Activated CD4-positive, alpha-beta memory T cell treated with anti-CD3 and anti-CD28 coated beads for 36 hours (primary cell): ENCODE measurements at regions of chr9 and their contacts with region 1.

Region 1: GRCh38 chr9:20941174-20941690 is 90.2 kb downstream of the HACD4 start:
- DNase-seq: peak; percentile 60
- H3K4me3 Mint-ChIP-seq: no peak overlapping the region
- H3K27ac Mint-ChIP-seq: no peak overlapping the region
- H3K4me1 Mint-ChIP-seq: peaks cover 3% of the 10 kb centered on the region
- H3K27me3 Mint-ChIP-seq: no peaks in the 10 kb centered on the region

Region 2: GRCh38 chr9:19464764-19465585 is 1476.3 kb before region 1 on chr9:
- CTCF ChIA-PET with region 1: interaction called, 10 read pairs
- POLR2A ChIA-PET with region 1: no interaction called
- intact Hi-C with region 1: no loop called
- DNase-seq: peak; percentile 73
- H3K4me3 Mint-ChIP-seq: peak overlapping the region; percentile 72
- H3K27ac Mint-ChIP-seq: no peak overlapping the region
- H3K4me1 Mint-ChIP-seq: peaks cover 7% of the 10 kb centered on the region
- H3K27me3 Mint-ChIP-seq: no peaks in the 10 kb centered on the region

Region 3: DNA sequence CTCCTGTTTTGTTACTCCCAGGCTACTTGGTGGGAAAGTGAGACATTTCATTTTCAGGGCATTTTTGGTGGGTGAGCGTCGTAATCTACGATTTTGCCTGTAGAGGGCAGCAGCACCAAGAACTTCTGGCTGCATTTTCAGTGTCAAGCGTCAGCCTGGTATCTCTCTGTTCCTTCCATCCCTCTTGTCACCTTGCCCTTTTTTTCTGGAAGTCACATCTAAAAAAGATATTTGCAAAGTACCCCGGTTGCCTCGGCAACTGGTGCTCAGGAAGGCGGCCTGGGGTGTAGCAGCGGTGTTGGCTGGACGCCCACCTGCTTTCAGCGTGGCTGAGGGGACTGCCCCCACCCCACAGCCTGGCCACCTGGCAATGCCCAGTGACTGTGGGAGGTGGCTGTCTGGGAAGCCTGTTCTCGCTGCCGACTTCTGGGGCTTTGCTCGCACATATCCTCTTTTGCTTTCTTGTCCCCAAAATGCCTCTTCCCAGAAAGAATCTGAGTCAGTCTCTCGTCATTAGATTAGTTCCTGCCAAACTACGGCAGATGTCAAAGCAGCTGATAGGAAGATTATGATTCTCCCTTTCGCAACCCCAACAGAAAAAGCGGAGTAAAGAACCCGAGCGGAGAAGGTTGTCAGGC is 1447.9 kb before region 1 on chr9:
- CTCF ChIA-PET with region 1: no interaction called
- POLR2A ChIA-PET with region 1: no interaction called
- intact Hi-C with region 1: loop called (anchors 10 kb)
- DNase-seq: peak; percentile 61
- H3K4me3 Mint-ChIP-seq: peak overlapping the region; percentile 48
- H3K27ac Mint-ChIP-seq: no peak overlapping the region
- H3K4me1 Mint-ChIP-seq: peaks cover 17% of the 10 kb centered on the region
- H3K27me3 Mint-ChIP-seq: no peaks in the 10 kb centered on the region

Region 4: DNA sequence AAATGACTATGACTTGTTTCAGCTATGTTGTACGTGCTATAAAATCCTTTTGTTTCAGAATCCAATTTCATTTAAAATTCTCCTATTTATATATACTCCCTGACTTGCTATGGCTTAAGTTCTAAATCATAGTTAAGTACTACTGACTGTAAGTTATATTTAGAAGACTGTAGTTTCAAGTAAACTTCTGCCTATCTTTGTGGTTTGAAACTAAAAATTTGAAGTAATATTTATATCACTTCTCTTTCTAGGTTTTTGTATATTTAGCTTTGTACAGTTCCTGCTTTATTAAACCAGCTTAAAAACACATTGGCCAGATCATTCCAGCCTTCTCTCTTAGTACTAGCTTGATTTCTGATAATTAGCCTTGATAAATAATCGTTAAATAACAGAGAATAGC is 515.2 kb before region 1 on chr9:
- CTCF ChIA-PET with region 1: no interaction called
- POLR2A ChIA-PET with region 1: no interaction called
- intact Hi-C with region 1: loop called (anchors 10 kb)
- DNase-seq: no peak
- H3K4me3 Mint-ChIP-seq: no peak overlapping the region
- H3K27ac Mint-ChIP-seq: no peak overlapping the region
- H3K4me1 Mint-ChIP-seq: peaks cover 10% of the 10 kb centered on the region
- H3K27me3 Mint-ChIP-seq: no peaks in the 10 kb centered on the region

Region 5: DNA sequence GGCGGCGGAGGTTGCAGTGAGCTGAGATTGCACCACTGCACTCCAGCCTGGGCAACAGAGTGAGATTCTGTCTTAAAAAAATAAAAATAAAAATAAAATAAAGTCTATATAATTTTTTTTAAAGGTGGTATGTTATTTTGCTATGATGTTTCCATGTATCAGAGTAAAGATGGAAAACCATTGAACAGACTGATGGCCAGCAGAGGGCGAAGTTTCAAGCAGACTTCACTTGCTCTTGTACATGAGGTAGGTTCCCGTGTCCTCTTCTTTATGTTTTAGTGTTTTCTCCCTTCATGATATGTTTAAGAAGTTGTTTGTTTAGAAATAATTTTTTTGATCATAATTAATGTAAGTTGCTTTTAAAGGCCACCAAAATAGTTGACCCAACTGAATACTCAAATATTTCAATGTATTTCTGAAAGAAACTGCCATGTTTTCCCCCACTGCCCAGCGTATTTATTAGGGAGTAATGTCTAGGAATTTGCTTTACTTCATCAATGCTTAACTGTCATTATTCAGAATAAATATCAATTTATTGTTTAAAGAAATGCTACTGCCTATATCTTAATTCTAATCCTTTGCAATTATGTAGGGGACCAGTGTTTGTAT is 56.1 kb before region 1 on chr9:
- CTCF ChIA-PET with region 1: interaction called, 81 read pairs
- POLR2A ChIA-PET with region 1: no interaction called
- intact Hi-C with region 1: loop called (anchors 2 kb)
- DNase-seq: peak; percentile 69
- H3K4me3 Mint-ChIP-seq: no peak overlapping the region
- H3K27ac Mint-ChIP-seq: no peak overlapping the region
- H3K4me1 Mint-ChIP-seq: no peaks in the 10 kb centered on the region
- H3K27me3 Mint-ChIP-seq: no peaks in the 10 kb centered on the region

Region 6: GRCh38 chr9:21110708-21111576 is 169.7 kb after region 1 on chr9:
- CTCF ChIA-PET with region 1: interaction called, 47 read pairs
- POLR2A ChIA-PET with region 1: no interaction called
- intact Hi-C with region 1: loop called (anchors 5 kb)
- DNase-seq: no peak
- H3K4me3 Mint-ChIP-seq: no peak overlapping the region
- H3K27ac Mint-ChIP-seq: no peak overlapping the region
- H3K4me1 Mint-ChIP-seq: no peaks in the 10 kb centered on the region
- H3K27me3 Mint-ChIP-seq: no peaks in the 10 kb centered on the region

Region 7: DNA sequence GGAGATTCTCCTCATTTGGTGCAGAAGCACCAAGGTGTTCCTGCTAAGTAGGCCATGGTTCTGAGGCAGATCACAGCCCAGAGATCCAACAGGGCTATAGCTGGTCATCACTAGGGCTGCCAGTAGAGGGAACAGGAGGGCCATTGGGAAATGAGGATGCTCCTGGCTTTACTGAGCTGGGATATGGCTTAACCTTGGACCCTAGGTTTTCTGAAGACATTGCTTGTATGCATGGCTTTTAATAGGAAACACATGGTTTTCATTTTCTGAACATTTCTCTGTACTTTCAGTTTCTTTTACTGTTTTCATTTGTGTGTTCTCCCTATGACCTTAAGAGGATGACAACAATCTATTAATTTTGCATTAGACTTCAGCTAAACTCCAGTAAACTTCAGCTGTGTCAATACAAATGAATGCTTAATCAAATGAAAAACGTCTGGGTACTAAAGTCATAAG is 200.2 kb after region 1 on chr9 and contains the start of gene IFNW1:
- CTCF ChIA-PET with region 1: no interaction called
- POLR2A ChIA-PET with region 1: no interaction called
- intact Hi-C with region 1: no loop called
- DNase-seq: no peak
- H3K4me3 Mint-ChIP-seq: no peak within 1 kb of the TSS
- H3K27ac Mint-ChIP-seq: no peak within 1 kb of the TSS
- H3K4me1 Mint-ChIP-seq: peaks cover 22% of the 10 kb centered on the region
- H3K27me3 Mint-ChIP-seq: no peaks in the 10 kb centered on the region
- total RNA-seq, gene IFNW1: not detected